Calu3 (cell line): ENCODE measurements at regions of chr18 and their contacts with region 1.

Region 1: DNA sequence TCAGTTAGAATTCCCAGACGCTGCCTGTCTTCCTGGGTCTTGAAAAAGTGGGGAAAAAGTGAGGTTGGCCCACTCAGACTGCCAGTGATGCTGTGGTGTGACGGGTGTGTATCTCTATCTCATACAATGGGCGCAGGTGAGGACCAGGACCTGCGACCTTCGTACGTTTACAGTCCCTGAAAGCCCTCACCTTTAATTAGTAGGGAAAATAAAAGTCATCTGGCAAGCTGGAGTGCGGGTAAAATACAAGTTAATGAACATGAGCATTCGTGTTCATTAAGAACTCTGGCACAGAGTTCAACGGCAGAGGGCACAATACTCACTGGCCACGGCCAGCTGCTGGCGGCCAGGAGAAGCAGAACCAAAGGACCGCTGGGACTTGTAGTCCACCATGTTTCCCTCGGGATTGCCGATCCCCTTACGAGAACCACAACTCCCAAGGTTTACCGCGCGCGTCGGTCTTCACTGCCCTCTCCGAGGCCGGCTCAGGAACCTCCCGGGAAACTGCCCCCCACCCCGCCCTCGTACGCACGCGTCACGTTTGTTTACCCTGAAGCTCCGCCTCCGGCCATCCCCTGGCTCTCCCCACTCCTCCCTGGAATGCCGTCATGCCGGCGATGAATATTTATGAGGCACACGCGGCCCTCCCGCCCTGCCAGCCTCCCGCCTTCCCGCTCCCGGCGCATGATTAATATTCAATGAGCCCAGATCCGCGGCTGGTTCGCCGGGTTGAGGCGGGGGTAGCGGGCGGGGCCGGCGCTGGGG is 488 bp upstream of the PHLPP1 start:
- DNase-seq: peak; percentile 99
- H3K4me3 Mint-ChIP-seq: peak overlapping the region; percentile 80
- H3K27ac Mint-ChIP-seq: peak overlapping the region; percentile 93
- H3K4me1 Mint-ChIP-seq: no peaks in the 10 kb centered on the region
- H3K27me3 Mint-ChIP-seq: no peaks in the 10 kb centered on the region
- CTCF ChIP-seq: peak; percentile 60

Region 2: GRCh38 chr18:61948281-61948741 is 766.5 kb before region 1 on chr18:
- CTCF ChIA-PET with region 1: no interaction called
- intact Hi-C with region 1: no loop called
- DNase-seq: no peak
- H3K4me3 Mint-ChIP-seq: no peak overlapping the region
- H3K27ac Mint-ChIP-seq: no peak overlapping the region
- H3K4me1 Mint-ChIP-seq: no peaks in the 10 kb centered on the region
- H3K27me3 Mint-ChIP-seq: no peaks in the 10 kb centered on the region
- CTCF ChIP-seq: no peak

Region 3: GRCh38 chr18:62526098-62527025 is 188.5 kb before region 1 on chr18:
- CTCF ChIA-PET with region 1: no interaction called
- intact Hi-C with region 1: loop called (anchors 5 kb)
- DNase-seq: peak; percentile 83
- H3K4me3 Mint-ChIP-seq: peak overlapping the region; percentile 84
- H3K27ac Mint-ChIP-seq: peak overlapping the region; percentile 97
- H3K4me1 Mint-ChIP-seq: peaks cover 38% of the 10 kb centered on the region
- H3K27me3 Mint-ChIP-seq: no peaks in the 10 kb centered on the region
- CTCF ChIP-seq: no peak

Region 4: GRCh38 chr18:62814132-62814759 is 99.4 kb after region 1 on chr18:
- CTCF ChIA-PET with region 1: interaction called, 6 read pairs
- intact Hi-C with region 1: loop called (anchors 5 kb)
- DNase-seq: no peak
- H3K4me3 Mint-ChIP-seq: no peak overlapping the region
- H3K27ac Mint-ChIP-seq: no peak overlapping the region
- H3K4me1 Mint-ChIP-seq: peaks cover 54% of the 10 kb centered on the region
- H3K27me3 Mint-ChIP-seq: no peaks in the 10 kb centered on the region
- CTCF ChIP-seq: no peak

Region 5: DNA sequence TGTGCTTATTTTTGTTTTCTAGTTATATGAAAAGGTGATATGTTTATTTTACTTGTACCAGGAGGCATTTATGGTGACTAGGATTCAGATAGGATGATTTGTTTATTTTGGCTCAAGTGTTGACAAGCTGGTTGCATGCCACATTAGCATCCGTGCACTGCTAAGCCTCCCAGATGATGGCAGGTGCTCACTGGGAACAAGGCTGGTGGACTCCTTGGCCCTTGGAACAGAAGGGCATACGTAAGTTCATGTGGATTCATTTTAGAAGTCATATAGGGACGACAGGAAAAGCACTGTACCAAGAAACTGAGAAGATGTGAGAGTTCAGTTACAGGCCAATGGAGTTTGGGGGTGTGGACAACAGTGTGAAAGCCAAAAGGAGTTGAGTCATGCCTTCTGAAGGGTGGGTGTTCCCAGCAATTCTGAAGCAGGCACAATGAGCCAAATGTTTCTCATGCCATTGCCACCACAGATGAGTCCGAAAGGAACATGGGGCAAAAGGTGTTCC is 166.7 kb after region 1 on chr18:
- CTCF ChIA-PET with region 1: interaction called, 4 read pairs
- intact Hi-C with region 1: loop called (anchors 2 kb)
- DNase-seq: peak; percentile 72
- H3K4me3 Mint-ChIP-seq: peak overlapping the region; percentile 45
- H3K27ac Mint-ChIP-seq: peak overlapping the region; percentile 77
- H3K4me1 Mint-ChIP-seq: peaks cover 72% of the 10 kb centered on the region
- H3K27me3 Mint-ChIP-seq: no peaks in the 10 kb centered on the region
- CTCF ChIP-seq: no peak

Region 6: DNA sequence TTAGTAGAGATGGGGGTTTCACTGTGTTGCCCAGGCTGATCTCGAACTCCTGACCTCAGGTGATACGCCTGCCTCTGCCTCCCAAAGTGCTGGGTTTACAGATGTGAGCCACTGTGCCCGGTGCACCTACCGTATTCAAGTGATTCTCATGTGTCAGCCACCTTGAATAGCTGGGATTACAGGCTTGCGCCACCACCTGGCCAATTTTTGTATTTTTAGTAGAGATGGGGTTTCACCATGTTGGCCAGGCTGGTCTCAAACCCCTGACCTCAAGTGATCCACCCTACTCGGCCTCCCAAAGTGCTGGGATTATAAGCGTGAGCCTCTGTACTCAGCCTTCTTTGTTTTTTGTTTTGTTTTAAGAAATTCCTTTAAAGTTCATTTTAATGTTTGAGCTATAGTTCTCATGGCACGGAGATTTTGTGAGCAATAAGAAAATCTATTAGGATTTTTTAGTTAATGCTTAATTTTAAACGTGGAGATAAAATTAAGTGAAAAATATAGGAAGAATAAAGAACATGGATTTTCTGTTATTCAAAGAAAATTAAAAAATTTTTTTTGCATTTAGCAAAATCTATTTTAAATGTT is 243.1 kb after region 1 on chr18:
- CTCF ChIA-PET with region 1: interaction called, 6 read pairs
- intact Hi-C with region 1: loop called (anchors 1 kb)
- DNase-seq: peak; percentile 75
- H3K4me3 Mint-ChIP-seq: no peak overlapping the region
- H3K27ac Mint-ChIP-seq: no peak overlapping the region
- H3K4me1 Mint-ChIP-seq: peaks cover 11% of the 10 kb centered on the region
- H3K27me3 Mint-ChIP-seq: no peaks in the 10 kb centered on the region
- CTCF ChIP-seq: peak; percentile 70

Region 7: GRCh38 chr18:62982600-62983251 is 267.9 kb after region 1 on chr18:
- CTCF ChIA-PET with region 1: interaction called, 12 read pairs
- intact Hi-C with region 1: loop called (anchors 2 kb)
- DNase-seq: peak; percentile 74
- H3K4me3 Mint-ChIP-seq: no peak overlapping the region
- H3K27ac Mint-ChIP-seq: peak overlapping the region; percentile 27
- H3K4me1 Mint-ChIP-seq: peaks cover 32% of the 10 kb centered on the region
- H3K27me3 Mint-ChIP-seq: no peaks in the 10 kb centered on the region
- CTCF ChIP-seq: peak; percentile 86